Activated CD4-positive, alpha-beta memory T cell treated with anti-CD3 and anti-CD28 coated beads for 36 hours (primary cell): ENCODE measurements at regions of chr20 and their contacts with region 1.

Region 1: GRCh38 chr20:35303735-35304491 is 11.7 kb upstream of the FAM83C start:
- DNase-seq: peak; percentile 92
- H3K4me3 Mint-ChIP-seq: no peak overlapping the region
- H3K27ac Mint-ChIP-seq: no peak overlapping the region
- H3K4me1 Mint-ChIP-seq: peaks cover 60% of the 10 kb centered on the region
- H3K27me3 Mint-ChIP-seq: no peaks in the 10 kb centered on the region

Region 2: GRCh38 chr20:35120012-35120701 is 183.8 kb before region 1 on chr20:
- CTCF ChIA-PET with region 1: no interaction called
- POLR2A ChIA-PET with region 1: no interaction called
- intact Hi-C with region 1: no loop called
- DNase-seq: peak; percentile 48
- H3K4me3 Mint-ChIP-seq: no peak overlapping the region
- H3K27ac Mint-ChIP-seq: peak overlapping the region; percentile 24
- H3K4me1 Mint-ChIP-seq: peaks cover 7% of the 10 kb centered on the region
- H3K27me3 Mint-ChIP-seq: no peaks in the 10 kb centered on the region

Region 3: DNA sequence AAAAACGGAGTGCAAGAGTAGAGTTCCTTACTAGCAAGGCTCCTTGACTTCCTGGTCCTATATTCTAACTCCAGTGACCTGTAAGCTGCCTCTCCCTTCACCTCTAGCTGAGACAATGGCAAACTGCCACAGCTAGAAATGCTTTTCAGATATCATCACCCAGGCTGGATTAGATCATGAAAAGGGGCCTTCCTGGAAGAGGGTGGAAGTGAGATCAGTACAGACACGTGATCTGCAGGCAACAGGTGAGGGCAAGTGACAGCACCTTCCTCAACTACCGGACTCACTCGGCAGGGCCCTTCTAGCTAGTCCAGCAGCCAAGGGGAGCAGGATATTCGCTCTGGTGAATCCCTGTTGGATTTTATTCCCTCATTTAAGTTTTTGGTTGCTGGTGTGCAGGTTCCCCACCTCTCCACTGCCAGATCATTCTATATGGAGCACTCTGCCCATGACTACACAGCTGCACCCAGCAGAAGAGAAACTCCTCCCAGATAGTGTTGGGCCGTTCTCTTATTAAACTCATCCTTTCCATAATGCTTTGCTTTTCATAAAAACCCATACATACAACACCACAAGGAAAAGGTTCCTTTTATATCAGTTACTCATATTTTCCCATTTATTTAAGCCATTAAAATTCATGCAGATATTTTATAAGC is 14.7 kb after region 1 on chr20:
- CTCF ChIA-PET with region 1: interaction called, 37 read pairs
- POLR2A ChIA-PET with region 1: interaction called, 3 read pairs
- intact Hi-C with region 1: no loop called
- DNase-seq: peak; percentile 21
- H3K4me3 Mint-ChIP-seq: no peak overlapping the region
- H3K27ac Mint-ChIP-seq: no peak overlapping the region
- H3K4me1 Mint-ChIP-seq: peaks cover 44% of the 10 kb centered on the region
- H3K27me3 Mint-ChIP-seq: no peaks in the 10 kb centered on the region

Region 4: DNA sequence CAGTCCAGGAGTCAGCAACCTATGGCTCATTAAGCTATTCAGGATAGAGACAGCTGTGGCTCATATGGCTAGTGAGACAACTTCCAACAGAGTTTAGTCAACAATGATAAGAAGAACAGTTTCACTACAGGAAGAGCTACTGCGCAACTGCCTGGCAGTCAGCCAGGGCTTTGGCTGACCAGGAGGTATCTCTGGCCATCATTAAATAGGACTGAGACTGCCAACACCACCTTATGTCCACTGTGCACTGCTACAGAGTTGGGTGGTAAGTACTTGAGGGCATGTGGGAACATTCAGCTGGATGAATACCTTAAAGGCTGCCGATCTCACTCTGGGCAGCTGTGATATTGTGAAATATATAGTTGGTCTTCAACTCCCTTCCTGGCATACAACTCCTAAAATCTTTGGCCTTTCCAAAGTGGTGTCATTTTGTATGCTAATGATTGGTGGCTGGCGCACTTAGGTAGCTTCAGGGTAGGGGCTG is 40.5 kb after region 1 on chr20:
- CTCF ChIA-PET with region 1: interaction called, 15 read pairs
- POLR2A ChIA-PET with region 1: no interaction called
- intact Hi-C with region 1: no loop called
- DNase-seq: no peak
- H3K4me3 Mint-ChIP-seq: no peak overlapping the region
- H3K27ac Mint-ChIP-seq: no peak overlapping the region
- H3K4me1 Mint-ChIP-seq: peaks cover 4% of the 10 kb centered on the region
- H3K27me3 Mint-ChIP-seq: no peaks in the 10 kb centered on the region

Region 5: GRCh38 chr20:35437491-35437998 is 133.6 kb after region 1 on chr20:
- CTCF ChIA-PET with region 1: interaction called, 47 read pairs
- POLR2A ChIA-PET with region 1: interaction called, 3 read pairs
- intact Hi-C with region 1: loop called (anchors 1 kb)
- DNase-seq: no peak
- H3K4me3 Mint-ChIP-seq: no peak overlapping the region
- H3K27ac Mint-ChIP-seq: no peak overlapping the region
- H3K4me1 Mint-ChIP-seq: no peaks in the 10 kb centered on the region
- H3K27me3 Mint-ChIP-seq: peaks cover 3% of the 10 kb centered on the region

Region 6: GRCh38 chr20:35454881-35455609 is 151.1 kb after region 1 on chr20 and contains the start of gene CEP250:
- CTCF ChIA-PET with region 1: interaction called, 99 read pairs
- POLR2A ChIA-PET with region 1: interaction called, 4 read pairs
- intact Hi-C with region 1: no loop called
- DNase-seq: peak; percentile 95
- H3K4me3 Mint-ChIP-seq: peak within 1 kb of the TSS; percentile 88
- H3K27ac Mint-ChIP-seq: peak within 1 kb of the TSS; percentile 97
- H3K4me1 Mint-ChIP-seq: peaks cover 28% of the 10 kb centered on the region
- H3K27me3 Mint-ChIP-seq: no peaks in the 10 kb centered on the region
- total RNA-seq, gene CEP250: 47.2 to 60.8 TPM

Region 7: GRCh38 chr20:35592339-35592974 is 288.5 kb after region 1 on chr20:
- CTCF ChIA-PET with region 1: no interaction called
- POLR2A ChIA-PET with region 1: no interaction called
- intact Hi-C with region 1: no loop called
- DNase-seq: no peak
- H3K4me3 Mint-ChIP-seq: no peak overlapping the region
- H3K27ac Mint-ChIP-seq: no peak overlapping the region
- H3K4me1 Mint-ChIP-seq: no peaks in the 10 kb centered on the region
- H3K27me3 Mint-ChIP-seq: no peaks in the 10 kb centered on the region